Activated CD8-positive, alpha-beta T cell treated with anti-CD3 and anti-CD28 coated beads, Interleukin-2, amount 10 ng/mL, durations not matched to agents 7 days and 5 days (primary cell): ENCODE measurements at regions of chr9 and their contacts with region 1.

Region 1: GRCh38 chr9:120477521-120478001 is 102.4 kb downstream of the CDK5RAP2 start:
- DNase-seq: peak; percentile 39
- ATAC-seq: peak; percentile 76
- H3K4me3 Mint-ChIP-seq: no peak overlapping the region
- H3K27ac Mint-ChIP-seq: no peak overlapping the region
- H3K4me1 Mint-ChIP-seq: no peaks in the 10 kb centered on the region
- H3K27me3 Mint-ChIP-seq: no peaks in the 10 kb centered on the region

Region 2: DNA sequence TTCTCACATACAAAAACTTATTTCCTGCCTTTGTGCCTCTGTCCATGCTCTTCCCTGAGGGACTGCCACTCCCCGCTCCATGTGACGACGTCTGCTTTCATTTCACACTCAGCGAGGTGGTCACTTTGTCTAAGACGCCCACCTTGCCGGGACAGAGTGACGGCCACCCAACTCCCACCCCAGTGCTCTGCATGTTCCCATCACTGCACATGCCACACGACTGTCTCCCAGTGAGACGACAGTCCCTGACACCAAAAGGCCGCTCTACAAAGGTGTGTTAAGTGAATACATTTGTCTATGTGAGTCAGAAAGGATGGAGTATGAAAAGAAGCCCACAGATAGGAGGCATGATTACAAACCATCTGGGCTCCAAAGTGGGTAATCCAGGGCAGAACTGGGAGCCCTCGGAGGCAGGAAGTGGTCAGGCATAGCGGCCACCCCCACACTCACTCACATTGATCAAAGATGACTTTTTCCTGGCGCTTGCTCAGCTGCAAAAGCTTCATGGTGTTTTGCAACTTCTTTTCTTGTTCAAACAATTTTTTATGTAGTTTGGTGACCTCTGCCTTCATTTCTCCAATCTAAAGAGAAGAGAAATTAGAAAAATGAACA is 83.4 kb before region 1 on chr9:
- CTCF ChIA-PET with region 1: no interaction called
- POLR2A ChIA-PET with region 1: no interaction called
- DNase-seq: peak; percentile 78
- ATAC-seq: peak; percentile 88
- H3K4me3 Mint-ChIP-seq: peak overlapping the region; percentile 7
- H3K27ac Mint-ChIP-seq: peak overlapping the region; percentile 65
- H3K4me1 Mint-ChIP-seq: peaks cover 40% of the 10 kb centered on the region
- H3K27me3 Mint-ChIP-seq: no peaks in the 10 kb centered on the region

Region 3: GRCh38 chr9:120438836-120439546 is 38.6 kb before region 1 on chr9:
- CTCF ChIA-PET with region 1: interaction called, 13 read pairs
- POLR2A ChIA-PET with region 1: no interaction called
- DNase-seq: peak; percentile 36
- ATAC-seq: peak; percentile 64
- H3K4me3 Mint-ChIP-seq: no peak overlapping the region
- H3K27ac Mint-ChIP-seq: no peak overlapping the region
- H3K4me1 Mint-ChIP-seq: peaks cover 24% of the 10 kb centered on the region
- H3K27me3 Mint-ChIP-seq: no peaks in the 10 kb centered on the region

Region 4: GRCh38 chr9:120464176-120464886 is 13.2 kb before region 1 on chr9:
- CTCF ChIA-PET with region 1: interaction called, 10 read pairs
- POLR2A ChIA-PET with region 1: no interaction called
- DNase-seq: no peak
- ATAC-seq: no peak
- H3K4me3 Mint-ChIP-seq: no peak overlapping the region
- H3K27ac Mint-ChIP-seq: no peak overlapping the region
- H3K4me1 Mint-ChIP-seq: no peaks in the 10 kb centered on the region
- H3K27me3 Mint-ChIP-seq: no peaks in the 10 kb centered on the region